Vagina (tissue), 2 donors: ENCODE measurements at regions of chr10 and their contacts with region 1.

Region 1: GRCh38 chr10:95741807-95742467 is 14.0 kb upstream of the ENTPD1 start:
- DNase-seq: no peak
- H3K4me3 ChIP-seq: no peak overlapping the region
- H3K27ac ChIP-seq: peak overlapping the region; percentile 9
- H3K4me1 ChIP-seq: no peaks in the 10 kb centered on the region
- H3K27me3 ChIP-seq: no peaks in the 10 kb centered on the region
- CTCF ChIP-seq: no peak
- POLR2A ChIP-seq: no peak

Region 2: GRCh38 chr10:95350219-95350829 is 391.6 kb before region 1 on chr10:
- intact Hi-C with region 1: no loop called
- DNase-seq: no peak
- H3K4me3 ChIP-seq: no peak overlapping the region
- H3K27ac ChIP-seq: peak overlapping the region; percentile 67
- H3K4me1 ChIP-seq: peaks cover 21% of the 10 kb centered on the region
- H3K27me3 ChIP-seq: no peaks in the 10 kb centered on the region
- CTCF ChIP-seq: no peak
- POLR2A ChIP-seq: no peak

Region 3: DNA sequence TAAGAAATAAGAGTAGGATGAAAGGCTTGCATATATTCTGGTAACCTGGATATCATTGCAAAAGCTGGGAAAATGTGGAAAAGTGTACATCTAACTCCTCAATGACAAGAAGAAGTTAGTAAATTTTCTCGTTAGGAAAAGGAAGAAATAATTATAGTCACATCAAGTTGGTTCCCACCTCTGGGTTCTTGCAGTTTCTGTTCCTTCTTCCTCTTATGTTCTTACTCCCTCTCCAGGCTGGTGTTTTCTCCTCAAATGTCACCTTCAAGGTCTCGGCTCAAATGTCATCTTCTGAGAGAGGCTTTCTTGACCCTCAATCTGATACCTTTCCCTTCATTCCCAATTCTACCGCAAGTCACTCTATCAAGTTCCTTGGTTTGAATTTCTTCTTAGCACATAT is 78.4 kb after region 1 on chr10:
- intact Hi-C with region 1: loop called (anchors 10 kb)
- DNase-seq: no peak
- H3K4me3 ChIP-seq: no peak overlapping the region
- H3K27ac ChIP-seq: no peak overlapping the region
- H3K4me1 ChIP-seq: no peaks in the 10 kb centered on the region
- H3K27me3 ChIP-seq: no peaks in the 10 kb centered on the region
- CTCF ChIP-seq: no peak
- POLR2A ChIP-seq: no peak

Region 4: GRCh38 chr10:95963226-95963990 is 221.5 kb after region 1 on chr10:
- intact Hi-C with region 1: no loop called
- DNase-seq: no peak
- H3K4me3 ChIP-seq: no peak overlapping the region
- H3K27ac ChIP-seq: no peak overlapping the region
- H3K4me1 ChIP-seq: no peaks in the 10 kb centered on the region
- H3K27me3 ChIP-seq: no peaks in the 10 kb centered on the region
- CTCF ChIP-seq: no peak
- POLR2A ChIP-seq: no peak